ENCODE measurements at regions of chr6 and their contacts with region 1.

Region 1: DNA sequence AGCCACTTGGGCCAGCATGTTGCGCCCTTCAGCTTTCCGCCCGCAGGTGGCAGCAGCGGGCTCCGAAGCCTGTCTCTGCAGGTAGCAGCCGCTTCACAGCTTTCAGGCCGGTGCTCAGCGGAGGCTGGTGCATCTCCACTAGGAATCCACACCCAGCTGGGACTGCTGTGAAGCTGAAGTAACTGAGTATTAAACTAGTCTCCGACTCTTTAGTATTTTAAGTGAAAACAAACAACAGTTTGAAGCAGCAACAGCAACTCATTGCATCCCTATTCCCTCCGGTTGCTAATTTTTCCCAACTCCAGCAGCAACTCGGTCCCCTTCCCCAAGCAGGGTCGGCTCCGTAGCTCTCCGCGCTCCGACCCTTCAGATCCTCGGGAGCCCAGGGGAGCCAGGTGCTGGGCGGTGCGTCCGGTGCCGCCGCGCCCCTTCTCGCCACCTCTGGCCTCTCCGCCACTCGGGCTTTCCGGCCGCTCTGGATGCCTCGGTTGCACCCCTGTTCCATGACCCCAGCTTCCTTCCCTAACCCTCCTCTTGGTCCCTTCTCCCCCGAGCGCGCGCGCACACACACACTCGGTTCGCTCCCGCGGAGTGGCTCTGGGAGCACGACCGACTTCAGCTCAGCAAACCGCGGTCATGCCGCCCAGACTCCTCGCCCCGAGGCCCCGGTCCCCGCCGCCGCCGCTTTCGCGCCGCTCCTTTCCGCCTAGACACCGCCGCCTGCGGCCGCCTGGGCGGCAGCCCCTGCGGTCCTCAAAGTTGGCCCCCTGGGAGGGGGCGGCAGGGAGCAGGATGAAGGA is 768 bp upstream of the NKAIN2 start:
- DNase-seq: peak; percentile 77
- H3K4me3 ChIP-seq: peak overlapping the region; percentile 30 to 57 (median 52)
- H3K27ac ChIP-seq: no peak overlapping the region
- H3K4me1 ChIP-seq: peaks cover 0 to 14% (median 11%) of the 10 kb centered on the region in 4 donors
- H3K27me3 ChIP-seq: peaks cover 0 to 22% (median 5%) of the 10 kb centered on the region in 3 donors
- CTCF ChIP-seq: peak; percentile 22 to 81 (median 64)
- EP300 ChIP-seq: no peak
- POLR2A ChIP-seq: no peak

Region 2: DNA sequence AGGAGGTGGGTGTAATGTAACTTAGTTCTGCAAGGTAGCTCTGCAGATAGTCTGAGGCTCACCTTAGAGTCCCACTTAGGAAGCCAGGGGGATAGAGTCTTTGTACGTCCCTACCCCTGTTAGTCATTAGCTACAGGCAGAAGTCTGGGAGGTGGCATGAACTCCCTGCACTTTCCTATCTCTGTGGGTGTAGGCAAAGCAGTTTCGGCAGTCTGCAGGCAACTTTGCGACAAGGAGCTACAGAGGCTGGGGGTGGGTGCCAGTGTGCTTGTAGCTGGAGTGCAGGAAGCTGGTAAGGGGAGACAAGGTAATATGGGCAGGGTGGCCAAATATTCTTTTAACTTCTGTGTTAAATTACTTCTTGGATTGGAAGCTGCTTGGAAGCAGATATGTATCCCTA is 46.5 kb after region 1 on chr6:
- intact Hi-C with region 1: no loop called
- DNase-seq: no peak
- H3K4me3 ChIP-seq: no peak overlapping the region
- H3K27ac ChIP-seq: no peak overlapping the region
- H3K4me1 ChIP-seq: no peaks in the 10 kb centered on the region
- H3K27me3 ChIP-seq: no peaks in the 10 kb centered on the region
- CTCF ChIP-seq: no peak
- EP300 ChIP-seq: no peak
- POLR2A ChIP-seq: no peak

Region 3: DNA sequence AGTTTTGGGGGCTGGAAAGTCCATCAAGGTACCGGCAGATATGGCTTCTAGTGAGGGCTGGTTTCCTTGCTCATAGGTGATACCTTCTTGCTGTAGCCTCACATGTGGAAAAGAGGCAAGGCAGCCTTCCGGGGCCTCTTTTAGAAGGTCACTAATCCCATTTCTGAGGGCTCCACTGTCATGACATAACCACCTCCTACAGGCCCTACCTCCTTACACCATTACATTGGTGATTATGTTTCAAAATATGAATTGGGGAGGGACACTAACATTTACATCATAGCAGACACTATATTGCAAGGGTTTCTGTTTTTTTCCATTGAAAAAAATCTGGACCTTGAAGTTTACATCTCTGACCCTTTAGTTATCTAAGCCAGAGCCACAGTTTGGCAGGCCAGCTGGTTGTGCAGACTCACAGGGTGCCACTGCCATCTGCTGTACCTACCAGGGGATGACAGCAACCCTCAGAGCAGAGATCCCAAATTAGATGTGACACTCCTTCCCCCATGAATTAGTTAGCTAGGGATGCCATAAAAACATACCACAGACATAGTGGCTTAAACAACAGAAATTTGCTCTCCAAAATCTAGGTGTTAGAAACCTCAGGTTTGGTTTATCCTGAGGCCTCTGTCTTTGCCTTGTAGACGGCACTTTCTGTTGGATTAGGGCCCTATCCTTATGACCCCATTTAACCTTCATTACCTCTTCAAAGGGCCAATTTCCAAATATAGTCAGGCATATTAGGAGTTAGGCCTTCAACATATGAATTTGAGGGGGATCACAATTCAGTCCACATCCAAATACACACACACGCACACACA is 993.0 kb after region 1 on chr6:
- intact Hi-C with region 1: loop called (anchors 5 kb)
- DNase-seq: no peak
- H3K4me3 ChIP-seq: no peak overlapping the region
- H3K27ac ChIP-seq: no peak overlapping the region
- H3K4me1 ChIP-seq: no peaks in the 10 kb centered on the region
- H3K27me3 ChIP-seq: no peaks in the 10 kb centered on the region
- CTCF ChIP-seq: peak in 1 of 4 experiments; percentile 31
- EP300 ChIP-seq: no peak
- POLR2A ChIP-seq: no peak

Region 4: DNA sequence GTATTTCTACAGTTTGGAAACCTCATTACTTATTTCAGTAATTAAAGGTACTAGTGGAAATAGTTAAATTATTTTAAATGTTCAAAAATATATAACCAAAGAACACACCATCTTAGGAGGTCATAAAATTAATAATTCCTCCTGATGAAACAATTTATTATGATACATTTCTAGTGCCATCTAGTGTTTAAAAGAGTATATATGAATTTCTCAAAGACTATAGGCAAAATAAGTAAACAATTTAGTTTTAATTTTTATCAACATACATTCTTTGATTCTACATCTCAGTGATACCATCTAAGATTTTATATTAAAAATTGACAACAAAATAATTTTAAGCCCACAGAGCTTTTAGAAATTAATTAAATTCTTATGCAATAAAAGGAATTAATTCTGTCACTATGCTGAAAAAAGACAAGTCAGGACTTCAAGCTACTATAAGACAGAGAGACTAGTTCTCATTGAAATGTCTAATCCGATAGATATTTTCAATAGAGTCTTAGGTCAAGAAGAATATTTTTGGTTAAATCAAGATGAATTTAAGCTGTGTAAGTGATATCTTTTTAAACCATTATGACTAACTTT is 1051.5 kb after region 1 on chr6:
- intact Hi-C with region 1: loop called (anchors 2 kb)
- DNase-seq: no peak
- H3K4me3 ChIP-seq: no peak overlapping the region
- H3K27ac ChIP-seq: no peak overlapping the region
- H3K4me1 ChIP-seq: no peaks in the 10 kb centered on the region
- H3K27me3 ChIP-seq: no peaks in the 10 kb centered on the region
- CTCF ChIP-seq: no peak
- EP300 ChIP-seq: no peak
- POLR2A ChIP-seq: no peak

Measured in sigmoid colon (tissue), 7 donors.